Gastrocnemius medialis (tissue), 4 donors: ENCODE measurements at regions of chr2 and their contacts with region 1.

Region 1: DNA sequence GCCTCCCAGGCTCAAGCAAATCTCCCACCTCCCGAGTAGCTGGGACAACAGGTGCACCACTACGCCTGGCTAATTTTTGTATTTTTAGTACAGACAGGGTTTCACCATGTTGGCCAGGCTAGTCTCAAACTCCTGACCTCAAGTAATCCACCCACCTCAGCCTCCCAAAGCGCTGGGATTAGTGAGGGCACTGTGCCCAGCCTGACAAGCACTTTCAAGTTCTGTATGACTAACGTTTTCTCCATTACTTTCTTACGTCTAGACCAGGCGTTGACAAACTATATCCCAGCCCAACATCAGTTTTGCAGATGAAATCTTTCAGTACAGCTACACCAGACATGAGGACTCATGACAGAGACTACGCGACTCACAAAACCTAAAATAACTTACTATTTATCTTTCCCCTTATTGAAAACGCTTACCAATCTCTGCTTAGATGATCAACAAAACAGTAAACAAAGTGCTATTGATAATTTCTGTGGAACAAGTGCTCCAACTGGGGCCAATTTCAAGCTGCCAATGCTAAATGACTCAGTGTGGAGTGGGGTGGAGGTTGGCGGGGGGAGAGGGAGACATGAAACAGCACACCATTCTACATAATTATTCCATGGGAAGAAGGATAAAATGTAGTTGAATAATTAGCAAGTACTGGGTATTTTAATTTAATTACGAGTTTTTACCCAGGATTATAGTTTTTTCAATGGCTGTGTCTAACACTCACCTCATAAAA is 59.1 kb downstream of the SAP130 start:
- DNase-seq: peak; percentile 51 to 90
- ATAC-seq: peak; percentile 96
- H3K4me3 ChIP-seq: no peak overlapping the region
- H3K27ac ChIP-seq: peak overlapping the region; percentile 73 to 91 (median 84)
- H3K4me1 ChIP-seq: peaks cover 8 to 9% of the 10 kb centered on the region in 2 donors
- H3K27me3 ChIP-seq: no peaks in the 10 kb centered on the region
- CTCF ChIP-seq: no peak
- POLR2A ChIP-seq: no peak

Region 2: GRCh38 chr2:127953128-127953718 is 15.6 kb before region 1 on chr2:
- in situ Hi-C with region 1: no loop called
- intact Hi-C with region 1: no loop called
- DNase-seq: peak in 1 of 2 donors; percentile 42
- ATAC-seq: peak in 1 of 2 donors; percentile 79
- H3K4me3 ChIP-seq: no peak overlapping the region
- H3K27ac ChIP-seq: peak overlapping the region in 3 of 4 donors; percentile 39 to 57 (median 51)
- H3K4me1 ChIP-seq: peaks cover 13 to 17% of the 10 kb centered on the region in 2 donors
- H3K27me3 ChIP-seq: no peaks in the 10 kb centered on the region
- CTCF ChIP-seq: no peak
- POLR2A ChIP-seq: no peak

Region 3: DNA sequence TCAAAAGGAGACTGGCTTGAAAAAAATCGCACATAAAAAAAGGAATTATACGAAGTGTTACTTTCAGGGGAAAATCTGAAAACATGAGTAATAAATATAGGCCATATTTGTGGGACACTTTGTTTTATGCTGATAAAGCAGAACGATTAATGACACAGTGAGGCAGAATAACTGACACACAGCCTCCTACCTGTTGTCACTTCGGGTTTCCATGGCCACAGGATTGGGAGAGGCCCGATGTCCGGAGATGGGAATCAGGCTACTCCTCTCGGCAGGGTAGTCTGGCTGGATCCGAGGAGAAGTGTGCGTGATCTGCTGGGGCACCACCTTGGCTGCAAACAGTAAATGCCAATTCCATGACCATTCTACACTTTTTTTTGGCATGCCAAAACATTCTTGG is 27.4 kb after region 1 on chr2:
- in situ Hi-C with region 1: no loop called
- intact Hi-C with region 1: loop called (anchors 1 kb)
- DNase-seq: no peak
- ATAC-seq: peak; percentile 37 to 56
- H3K4me3 ChIP-seq: no peak overlapping the region
- H3K27ac ChIP-seq: peak overlapping the region; percentile 6 to 65 (median 58)
- H3K4me1 ChIP-seq: peaks cover 0 to 5% of the 10 kb centered on the region in 2 donors
- H3K27me3 ChIP-seq: no peaks in the 10 kb centered on the region
- CTCF ChIP-seq: no peak
- POLR2A ChIP-seq: no peak

Region 4: DNA sequence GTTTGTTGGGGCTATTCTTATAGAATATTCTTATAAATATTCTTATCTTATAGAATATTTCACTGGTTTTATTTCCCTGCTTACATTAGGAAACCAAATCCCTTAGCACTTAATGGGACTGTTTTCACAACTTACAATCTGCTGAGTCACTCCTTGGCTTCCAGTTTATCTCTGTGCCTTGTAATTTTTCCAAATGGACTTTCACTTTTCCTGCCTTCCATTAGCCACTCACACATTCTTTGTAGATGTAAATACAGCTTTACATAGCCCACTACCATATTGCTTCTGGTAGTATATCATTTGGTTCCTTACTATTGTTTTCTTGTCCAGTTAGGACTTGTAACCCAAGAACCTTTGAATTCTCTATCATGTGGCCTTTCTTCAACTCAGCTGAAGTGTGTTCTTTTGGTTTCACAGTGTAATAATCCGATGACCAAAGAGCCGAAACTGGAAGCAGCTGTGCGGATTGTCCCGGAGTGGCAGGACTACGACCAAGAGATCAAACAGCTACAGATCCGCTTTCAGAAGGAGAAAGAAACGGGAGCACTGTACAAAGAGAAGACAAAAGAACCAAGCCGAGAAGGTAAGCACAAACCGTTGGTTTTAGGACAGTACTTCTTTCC is 218.4 kb after region 1 on chr2:
- in situ Hi-C with region 1: no loop called
- intact Hi-C with region 1: loop called (anchors 5 kb)
- DNase-seq: peak; percentile 66 to 75
- ATAC-seq: peak; percentile 98
- H3K4me3 ChIP-seq: peak overlapping the region; percentile 38 to 54 (median 52)
- H3K27ac ChIP-seq: peak overlapping the region; percentile 84 to 92 (median 86)
- H3K4me1 ChIP-seq: peaks cover 7 to 18% of the 10 kb centered on the region in 2 donors
- H3K27me3 ChIP-seq: no peaks in the 10 kb centered on the region
- CTCF ChIP-seq: no peak
- POLR2A ChIP-seq: peak; percentile 19 to 37